Dendritic cell treated with granulocyte-macrophage colony-stimulating factor and Interleukin-4, amounts not matched to agents 40 ng/mL and 50 ng/mL, for 4 days (primary cell): ENCODE measurements at regions of chr10 and their contacts with region 1.

Region 1: GRCh38 chr10:103244663-103245271 is 920 bp upstream of the RPEL1 start:
- H3K4me3 Mint-ChIP-seq: no peak overlapping the region
- H3K27ac Mint-ChIP-seq: peak overlapping the region; percentile 28
- H3K4me1 Mint-ChIP-seq: peaks cover 32% of the 10 kb centered on the region
- H3K27me3 Mint-ChIP-seq: no peaks in the 10 kb centered on the region

Region 2: GRCh38 chr10:102835007-102835482 is 409.7 kb before region 1 on chr10:
- intact Hi-C with region 1: loop called (anchors 10 kb)
- H3K4me3 Mint-ChIP-seq: no peak overlapping the region
- H3K27ac Mint-ChIP-seq: no peak overlapping the region
- H3K4me1 Mint-ChIP-seq: peaks cover 10% of the 10 kb centered on the region
- H3K27me3 Mint-ChIP-seq: peaks cover 11% of the 10 kb centered on the region

Region 3: DNA sequence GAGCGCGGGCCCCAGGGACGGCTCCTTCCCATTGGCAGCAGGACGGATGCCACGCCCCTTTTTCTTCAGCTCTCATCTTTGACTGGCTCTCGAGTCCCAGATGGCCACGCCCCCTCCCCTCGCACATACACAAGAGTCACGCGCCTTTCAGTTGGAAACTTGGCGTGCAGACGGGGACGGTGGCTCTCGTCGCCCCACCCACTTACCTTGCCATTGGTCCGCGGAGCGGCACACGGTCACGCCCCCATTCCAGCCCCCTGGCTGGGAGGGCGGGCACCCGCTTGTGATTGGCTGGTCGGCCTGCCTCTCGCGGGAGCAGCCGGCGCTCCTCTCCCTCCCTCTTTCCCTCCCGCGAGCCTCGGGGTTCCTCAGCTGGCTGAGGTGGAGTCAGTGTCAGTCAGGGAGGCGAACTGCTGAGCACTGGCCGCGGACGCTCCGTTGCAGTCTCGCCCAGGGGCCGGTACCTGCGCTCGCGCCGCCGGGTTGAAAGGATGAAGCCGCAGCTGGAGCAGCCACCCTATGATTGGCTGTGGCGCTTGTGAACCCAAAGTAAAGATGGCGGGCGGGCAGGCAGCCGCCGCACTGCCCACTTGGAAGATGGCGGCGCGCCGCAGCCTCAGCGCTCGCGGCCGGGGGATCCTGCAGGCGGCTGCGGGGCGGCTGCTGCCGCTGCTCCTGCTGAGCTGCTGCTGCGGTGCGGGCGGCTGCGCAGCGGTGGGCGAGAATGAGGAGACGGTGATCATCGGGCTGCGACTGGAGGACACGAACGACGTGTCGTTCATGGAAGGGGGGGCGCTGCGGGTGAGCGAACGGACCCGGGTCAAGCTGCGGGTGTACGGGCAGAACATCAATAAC is 326.6 kb before region 1 on chr10 and contains the start of gene CNNM2:
- intact Hi-C with region 1: loop called (anchors 1 kb)
- H3K4me3 Mint-ChIP-seq: peak within 1 kb of the TSS; percentile 99
- H3K27ac Mint-ChIP-seq: peak within 1 kb of the TSS; percentile 95
- H3K4me1 Mint-ChIP-seq: peaks cover 52% of the 10 kb centered on the region
- H3K27me3 Mint-ChIP-seq: peaks cover 39% of the 10 kb centered on the region

Region 4: DNA sequence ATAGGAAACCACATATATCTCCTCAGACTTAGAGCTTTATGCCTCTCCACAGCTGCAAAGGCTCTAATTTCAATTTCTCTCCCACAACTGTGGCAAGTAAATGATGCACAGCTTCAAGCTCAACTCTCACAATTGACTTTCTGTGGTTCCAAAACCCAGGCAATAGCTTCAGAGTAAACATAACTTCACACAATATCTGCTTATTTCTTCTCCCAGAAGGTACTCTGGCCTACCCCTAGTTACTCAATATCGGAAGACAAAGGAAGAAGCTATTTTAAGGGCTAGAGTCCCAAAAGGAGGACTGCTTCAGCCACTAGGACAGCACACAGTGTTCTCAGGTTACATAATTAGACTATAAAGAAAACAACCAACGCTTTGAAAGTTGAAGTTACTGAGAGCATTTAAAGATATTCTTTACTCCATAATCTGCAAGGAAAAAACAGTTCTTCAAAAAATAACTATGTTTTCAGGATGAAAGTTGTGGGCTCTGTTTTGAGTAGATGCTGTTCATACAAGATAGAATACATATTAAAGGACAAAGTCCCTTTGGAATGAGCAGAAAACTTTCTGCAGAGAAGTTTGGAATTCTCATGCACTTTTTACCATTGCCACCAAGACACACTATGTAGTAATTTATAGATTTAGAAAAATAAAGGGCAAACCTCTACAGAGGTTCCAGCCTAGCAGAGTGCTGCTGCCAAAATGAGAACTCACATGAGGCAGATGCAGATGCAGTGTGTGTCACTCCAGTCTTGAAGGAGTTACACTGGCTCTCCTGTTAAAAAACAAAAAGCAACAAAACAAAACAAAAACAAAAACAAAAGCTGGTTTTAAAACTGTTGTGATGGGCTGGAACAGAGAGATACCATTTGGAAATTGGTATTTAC is 133.5 kb before region 1 on chr10:
- intact Hi-C with region 1: loop called (anchors 10 kb)
- H3K4me3 Mint-ChIP-seq: no peak overlapping the region
- H3K27ac Mint-ChIP-seq: no peak overlapping the region
- H3K4me1 Mint-ChIP-seq: peaks cover 15% of the 10 kb centered on the region
- H3K27me3 Mint-ChIP-seq: no peaks in the 10 kb centered on the region

Region 5: GRCh38 chr10:103127241-103127640 is 117.5 kb before region 1 on chr10:
- intact Hi-C with region 1: no loop called
- H3K4me3 Mint-ChIP-seq: no peak overlapping the region
- H3K27ac Mint-ChIP-seq: no peak overlapping the region
- H3K4me1 Mint-ChIP-seq: no peaks in the 10 kb centered on the region
- H3K27me3 Mint-ChIP-seq: no peaks in the 10 kb centered on the region

Region 6: GRCh38 chr10:103192451-103193106 is 52.2 kb before region 1 on chr10:
- intact Hi-C with region 1: loop called (anchors 2 kb)
- H3K4me3 Mint-ChIP-seq: peak overlapping the region; percentile 98
- H3K27ac Mint-ChIP-seq: peak overlapping the region; percentile 100
- H3K4me1 Mint-ChIP-seq: peaks cover 56% of the 10 kb centered on the region
- H3K27me3 Mint-ChIP-seq: no peaks in the 10 kb centered on the region

Region 7: GRCh38 chr10:103197903-103198302 is 46.9 kb before region 1 on chr10:
- intact Hi-C with region 1: loop called (anchors 1 kb)
- H3K4me3 Mint-ChIP-seq: peak overlapping the region; percentile 68
- H3K27ac Mint-ChIP-seq: peak overlapping the region; percentile 87
- H3K4me1 Mint-ChIP-seq: peaks cover 74% of the 10 kb centered on the region
- H3K27me3 Mint-ChIP-seq: no peaks in the 10 kb centered on the region

Region 8: GRCh38 chr10:103316087-103316486 is 71.3 kb after region 1 on chr10:
- intact Hi-C with region 1: no loop called
- H3K4me3 Mint-ChIP-seq: no peak overlapping the region
- H3K27ac Mint-ChIP-seq: no peak overlapping the region
- H3K4me1 Mint-ChIP-seq: no peaks in the 10 kb centered on the region
- H3K27me3 Mint-ChIP-seq: no peaks in the 10 kb centered on the region